SK-N-SH (cell line): ENCODE measurements at regions of chr20 and their contacts with region 1.

Region 1: GRCh38 chr20:63537525-63538203 is 488 bp upstream of the PTK6 start:
- DNase-seq: peak; percentile 97
- H3K4me3 ChIP-seq: peak overlapping the region in 1 of 2 experiments; percentile 29; a peak in 2 of 4 replicates
- H3K27ac ChIP-seq: peak overlapping the region in 1 of 2 experiments; percentile 76; a peak in 2 of 4 replicates
- H3K4me1 ChIP-seq: peaks cover 0 to 32% of the 10 kb centered on the region in 2 experiments; a peak in 1 of 4 replicates
- H3K27me3 ChIP-seq: no peaks in the 10 kb centered on the region
- CTCF ChIP-seq: peak; percentile 81
- EP300 ChIP-seq: no peak
- RAD21 ChIP-seq: peak; percentile 93

Region 2: DNA sequence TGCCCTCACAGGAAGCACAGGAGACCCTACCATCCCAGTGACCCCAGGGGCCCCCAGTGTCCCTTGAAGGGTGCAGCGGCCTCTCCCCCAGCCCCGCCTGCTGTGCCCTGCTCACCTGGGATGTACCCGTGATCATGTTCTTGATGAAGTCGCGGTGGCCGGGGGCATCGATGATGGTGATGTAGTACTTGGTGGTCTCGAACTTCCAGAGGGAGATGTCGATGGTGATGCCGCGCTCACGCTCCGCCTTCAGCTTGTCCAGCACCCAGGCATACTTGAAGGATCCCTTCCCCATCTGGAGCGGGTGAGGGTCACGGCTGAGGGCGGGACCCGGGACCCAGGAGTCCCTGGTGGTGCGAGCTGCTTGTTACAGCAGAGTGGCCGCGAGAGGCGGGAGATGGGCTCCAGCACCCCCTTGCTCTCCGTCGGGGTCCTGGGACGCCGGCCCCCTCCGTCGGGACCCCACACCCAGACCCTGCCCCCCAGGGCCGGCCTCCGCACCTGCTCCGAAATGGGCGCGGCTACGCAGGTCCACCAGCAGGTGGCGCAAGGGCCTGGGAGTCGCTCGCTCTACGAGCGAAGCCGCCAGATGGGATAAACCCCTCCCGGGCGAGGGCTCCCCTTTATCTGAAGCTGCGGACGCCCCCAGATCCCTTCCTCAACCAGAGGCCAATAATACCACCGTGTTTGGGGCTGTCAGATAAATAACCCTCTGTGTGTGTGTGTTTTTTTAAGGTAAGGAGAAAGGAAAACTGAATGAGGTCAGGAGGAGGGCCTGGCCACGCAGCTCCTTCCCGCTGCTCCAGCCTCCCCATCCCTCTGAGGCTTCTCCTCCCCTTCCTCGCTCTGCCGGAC is 41.7 kb before region 1 on chr20:
- CTCF ChIA-PET with region 1: interaction called, 45 read pairs
- POLR2A ChIA-PET with region 1: interaction called, 10 read pairs
- DNase-seq: peak; percentile 90
- H3K4me3 ChIP-seq: peak overlapping the region; percentile 12 to 52; a peak in 2 of 4 replicates
- H3K27ac ChIP-seq: peak overlapping the region in 1 of 2 experiments; percentile 62; a peak in 1 of 4 replicates
- H3K4me1 ChIP-seq: peaks cover 0 to 30% of the 10 kb centered on the region in 2 experiments; a peak in 1 of 4 replicates
- H3K27me3 ChIP-seq: no peaks in the 10 kb centered on the region
- CTCF ChIP-seq: peak; percentile 91
- EP300 ChIP-seq: no peak
- RAD21 ChIP-seq: peak; percentile 65

Region 3: GRCh38 chr20:63553227-63553932 is 15.7 kb after region 1 on chr20:
- CTCF ChIA-PET with region 1: interaction called, 66 read pairs
- POLR2A ChIA-PET with region 1: interaction called, 4 read pairs
- DNase-seq: peak; percentile 98
- H3K4me3 ChIP-seq: peak overlapping the region; percentile 71 to 85
- H3K27ac ChIP-seq: peak overlapping the region in 1 of 2 experiments; percentile 75; a peak in 1 of 4 replicates
- H3K4me1 ChIP-seq: peaks cover 0 to 14% of the 10 kb centered on the region in 2 experiments; a peak in 1 of 4 replicates
- H3K27me3 ChIP-seq: no peaks in the 10 kb centered on the region
- CTCF ChIP-seq: no peak
- EP300 ChIP-seq: no peak
- RAD21 ChIP-seq: no peak

Region 4: DNA sequence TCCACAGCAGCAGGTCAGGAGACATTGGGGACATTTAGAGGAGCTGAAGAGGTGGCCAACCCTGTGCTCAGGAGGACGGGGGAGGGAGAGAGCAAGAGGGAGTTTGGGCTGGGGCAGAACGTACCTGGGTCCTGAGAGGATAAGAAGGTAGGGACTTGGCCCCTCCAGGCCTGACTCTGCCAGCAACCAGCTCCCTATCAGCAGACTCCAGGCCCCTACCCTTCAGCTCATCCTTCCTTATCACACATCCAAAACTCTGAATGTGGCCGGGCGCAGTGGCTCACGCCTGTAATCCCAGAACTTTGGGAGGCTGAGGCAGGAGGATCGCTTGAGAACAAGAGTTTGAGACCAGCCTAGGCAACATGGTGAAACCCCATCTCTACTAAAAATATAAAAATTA is 110.5 kb after region 1 on chr20:
- CTCF ChIA-PET with region 1: interaction called, 27 read pairs
- POLR2A ChIA-PET with region 1: interaction called, 3 read pairs
- DNase-seq: no peak
- H3K4me3 ChIP-seq: no peak overlapping the region
- H3K27ac ChIP-seq: no peak overlapping the region
- H3K4me1 ChIP-seq: peaks cover 8% of the 10 kb centered on the region in 2 experiments; a peak in 2 of 4 replicates
- H3K27me3 ChIP-seq: no peaks in the 10 kb centered on the region
- CTCF ChIP-seq: no peak
- EP300 ChIP-seq: no peak
- RAD21 ChIP-seq: no peak

Region 5: DNA sequence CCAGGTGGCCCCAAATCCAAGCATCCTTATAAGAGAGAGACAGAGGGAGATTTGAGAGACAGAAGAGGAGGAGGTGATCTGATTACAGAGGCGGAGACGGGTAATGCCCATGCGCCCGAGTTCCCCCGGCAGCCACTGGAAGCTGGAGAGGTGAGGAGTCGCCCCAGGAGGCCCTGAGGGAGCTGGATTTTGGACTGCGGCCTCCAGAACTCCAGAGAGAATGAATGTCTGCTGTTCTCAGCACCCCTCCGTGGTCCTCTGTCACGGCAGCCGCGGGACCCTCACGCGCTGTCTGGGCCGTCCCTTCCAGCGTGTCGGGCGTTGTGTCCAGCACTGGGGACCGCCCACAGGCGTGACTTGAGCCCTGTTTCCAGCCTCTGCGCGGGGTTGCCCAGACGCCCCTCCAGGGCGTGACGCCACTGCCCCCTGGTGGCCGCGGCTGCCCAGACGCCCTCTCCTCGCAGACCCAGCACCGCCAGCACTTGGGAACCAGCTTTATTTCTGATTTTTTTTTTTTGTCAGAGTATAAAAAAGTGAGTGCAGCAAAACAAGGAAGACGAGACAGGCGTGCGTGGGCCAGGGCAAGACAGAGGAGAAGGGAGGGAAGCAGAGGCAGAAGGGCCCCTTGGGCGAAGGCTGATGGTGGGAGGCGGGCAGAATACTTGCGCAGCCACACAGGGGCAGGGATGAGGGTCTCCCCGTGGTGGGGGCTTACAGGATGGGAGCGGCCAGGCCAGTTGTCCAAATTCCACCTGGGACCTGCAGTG is 436.2 kb after region 1 on chr20:
- CTCF ChIA-PET with region 1: interaction called, 42 read pairs
- POLR2A ChIA-PET with region 1: interaction called, 3 read pairs
- DNase-seq: peak; percentile 95
- H3K4me3 ChIP-seq: peak overlapping the region; percentile 7 to 12; a peak in 2 of 4 replicates
- H3K27ac ChIP-seq: no peak overlapping the region
- H3K4me1 ChIP-seq: peaks cover 5 to 17% of the 10 kb centered on the region in 2 experiments; a peak in 3 of 4 replicates
- H3K27me3 ChIP-seq: no peaks in the 10 kb centered on the region
- CTCF ChIP-seq: peak; percentile 98
- EP300 ChIP-seq: no peak
- RAD21 ChIP-seq: peak; percentile 91